ENCODE measurements at regions of chr16 and their contacts with region 1.

Region 1: DNA sequence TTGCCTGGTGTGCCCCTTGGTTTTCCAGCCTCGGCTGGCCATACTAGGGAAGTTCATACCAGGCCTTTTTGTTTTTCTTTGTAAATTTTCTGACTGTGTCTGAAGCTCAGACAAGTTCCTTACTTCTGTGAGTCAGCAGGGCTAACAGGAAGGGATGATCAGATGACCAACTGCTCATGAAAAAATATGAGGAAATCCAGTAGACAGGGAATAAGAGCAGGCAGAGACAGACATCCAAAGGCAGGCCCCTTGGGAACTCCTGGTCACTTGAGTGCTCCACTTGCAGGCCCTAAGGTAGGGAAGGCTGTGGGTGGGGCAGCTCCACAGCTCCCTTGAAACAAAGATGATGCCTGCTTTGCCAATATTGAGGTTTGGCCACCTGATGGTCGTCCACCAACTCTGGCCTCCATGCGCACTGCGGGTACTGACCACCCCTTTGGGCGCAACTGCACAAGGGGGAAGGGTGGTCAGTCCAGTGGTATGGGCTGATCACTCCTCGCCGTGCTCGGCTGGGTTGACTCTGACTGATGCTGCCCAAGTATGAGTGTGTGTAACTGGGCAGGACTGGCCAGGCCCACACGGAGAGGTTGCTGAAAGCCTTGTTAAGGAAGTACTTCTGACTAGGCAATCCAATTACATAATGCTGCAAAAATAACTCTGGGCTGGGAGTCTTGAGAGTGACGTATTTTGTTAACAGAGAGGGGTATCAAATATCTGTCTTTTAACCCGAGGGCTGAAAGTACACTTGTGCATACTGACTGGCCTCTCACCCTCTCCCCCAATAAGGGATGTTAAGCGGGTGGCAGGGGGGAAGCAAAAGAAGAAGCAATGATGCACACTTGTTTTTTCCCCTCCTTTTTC is 20.8 kb upstream of the ZFHX3 start:
- DNase-seq: peak in 2 of 6 donors; percentile 26 to 68
- ATAC-seq: peak in 3 of 4 donors; percentile 26 to 64 (median 41)
- H3K4me3 ChIP-seq: no peak overlapping the region
- H3K27ac ChIP-seq: peak overlapping the region in 3 of 4 donors; percentile 42 to 92 (median 84)
- H3K4me1 ChIP-seq: peaks cover 0 to 47% (median 6%) of the 10 kb centered on the region in 3 donors
- H3K27me3 ChIP-seq: peaks cover 0 to 4% (median 0%) of the 10 kb centered on the region in 4 donors
- CTCF ChIP-seq: no peak

Region 2: GRCh38 chr16:72910875-72911274 is 157.9 kb before region 1 on chr16:
- intact Hi-C with region 1: no loop called
- DNase-seq: no peak
- ATAC-seq: no peak
- H3K4me3 ChIP-seq: no peak overlapping the region
- H3K27ac ChIP-seq: no peak overlapping the region
- H3K4me1 ChIP-seq: peaks cover 6 to 9% (median 9%) of the 10 kb centered on the region in 3 donors
- H3K27me3 ChIP-seq: no peaks in the 10 kb centered on the region
- CTCF ChIP-seq: no peak

Region 3: DNA sequence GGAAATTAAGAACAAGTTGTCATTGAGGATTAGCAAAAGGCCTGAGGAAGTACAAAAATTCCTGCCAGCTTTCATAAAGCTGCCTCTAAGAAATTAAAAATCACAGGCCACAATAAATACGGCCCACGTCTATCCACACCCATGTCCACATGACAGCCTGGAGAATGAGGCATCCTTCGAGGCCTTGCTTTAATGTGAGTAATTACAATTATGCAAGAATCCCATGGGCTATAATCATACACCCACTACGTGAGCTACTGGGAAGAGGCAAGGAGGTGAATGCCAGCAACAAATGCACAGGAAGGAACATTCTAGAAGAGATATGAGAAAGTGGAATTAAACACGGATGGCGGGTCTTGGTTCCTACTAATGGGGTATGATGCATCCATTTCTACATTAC is 44.6 kb after region 1 on chr16:
- intact Hi-C with region 1: no loop called
- DNase-seq: no peak
- ATAC-seq: peak in 1 of 4 donors; percentile 54
- H3K4me3 ChIP-seq: no peak overlapping the region
- H3K27ac ChIP-seq: no peak overlapping the region
- H3K4me1 ChIP-seq: no peaks in the 10 kb centered on the region
- H3K27me3 ChIP-seq: no peaks in the 10 kb centered on the region
- CTCF ChIP-seq: no peak

Region 4: DNA sequence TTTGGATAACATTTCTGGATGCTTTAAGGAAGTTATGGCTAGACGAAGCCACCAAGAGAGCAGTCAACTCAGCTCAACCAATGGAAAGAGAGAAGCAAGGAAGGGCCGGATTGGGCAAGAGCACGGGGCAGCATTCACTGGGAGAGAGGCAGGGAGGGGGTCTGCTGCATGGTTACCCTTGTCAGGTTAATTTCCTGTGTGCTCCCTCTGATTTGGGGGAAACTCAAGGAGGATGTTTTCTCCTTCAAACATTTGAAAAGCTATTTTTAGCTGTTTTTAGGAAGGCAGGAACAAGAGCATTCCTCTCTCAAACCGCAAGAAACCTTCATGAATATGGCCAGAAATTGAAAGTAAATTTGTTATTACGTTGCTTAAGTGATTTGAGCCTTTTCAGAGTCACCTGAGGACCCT is 97.7 kb after region 1 on chr16:
- intact Hi-C with region 1: loop called in 2 of 3 experiments (anchors 10 kb)
- DNase-seq: no peak
- ATAC-seq: peak in 2 of 4 donors; percentile 48 to 60
- H3K4me3 ChIP-seq: no peak overlapping the region
- H3K27ac ChIP-seq: no peak overlapping the region
- H3K4me1 ChIP-seq: peaks cover 0 to 5% (median 0%) of the 10 kb centered on the region in 3 donors
- H3K27me3 ChIP-seq: no peaks in the 10 kb centered on the region
- CTCF ChIP-seq: no peak

Region 5: DNA sequence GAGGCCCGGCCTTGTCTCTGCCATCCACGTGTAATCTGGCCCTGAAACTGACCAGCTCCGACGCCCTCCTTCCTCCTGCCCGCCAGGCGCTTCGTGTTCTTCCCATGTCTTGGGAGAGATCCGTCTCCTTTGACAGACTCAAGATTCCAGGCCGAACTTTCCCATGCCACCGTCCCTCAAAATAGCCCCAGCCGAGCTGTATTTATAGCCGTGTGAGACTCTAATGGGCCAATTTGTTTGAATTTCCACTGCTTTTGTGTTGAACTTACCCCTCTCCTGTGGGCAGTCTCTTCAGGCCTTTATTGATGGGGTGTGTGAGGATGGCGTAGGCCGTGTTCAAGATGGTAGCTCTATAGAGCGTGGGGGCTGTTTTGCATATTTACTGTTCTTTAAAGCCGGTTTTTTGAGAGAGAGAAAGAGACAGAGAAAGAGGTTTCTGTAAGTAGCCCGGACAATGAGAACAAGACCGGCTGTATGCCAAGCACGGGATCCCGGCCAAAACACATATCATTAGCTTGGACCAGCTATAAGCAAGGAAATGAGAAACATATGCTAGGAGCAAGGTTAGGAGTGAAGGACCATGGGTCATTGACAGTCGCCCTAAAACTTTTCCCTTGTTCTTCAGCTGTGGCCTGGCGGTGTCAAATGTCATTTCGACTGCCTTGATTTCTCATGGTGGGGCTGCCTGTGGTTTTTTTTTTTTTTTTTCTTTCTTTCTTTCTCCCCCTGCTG is 103.6 kb after region 1 on chr16:
- intact Hi-C with region 1: loop called in 2 of 3 experiments (anchors 10 kb)
- DNase-seq: peak; percentile 78 to 89 (median 83)
- ATAC-seq: peak; percentile 88 to 94 (median 90)
- H3K4me3 ChIP-seq: peak overlapping the region in 1 of 4 donors; percentile 10
- H3K27ac ChIP-seq: peak overlapping the region in 1 of 4 donors; percentile 44
- H3K4me1 ChIP-seq: peaks cover 0 to 6% (median 4%) of the 10 kb centered on the region in 3 donors
- H3K27me3 ChIP-seq: no peaks in the 10 kb centered on the region
- CTCF ChIP-seq: peak in 2 of 4 donors; percentile 12 to 18

Region 6: DNA sequence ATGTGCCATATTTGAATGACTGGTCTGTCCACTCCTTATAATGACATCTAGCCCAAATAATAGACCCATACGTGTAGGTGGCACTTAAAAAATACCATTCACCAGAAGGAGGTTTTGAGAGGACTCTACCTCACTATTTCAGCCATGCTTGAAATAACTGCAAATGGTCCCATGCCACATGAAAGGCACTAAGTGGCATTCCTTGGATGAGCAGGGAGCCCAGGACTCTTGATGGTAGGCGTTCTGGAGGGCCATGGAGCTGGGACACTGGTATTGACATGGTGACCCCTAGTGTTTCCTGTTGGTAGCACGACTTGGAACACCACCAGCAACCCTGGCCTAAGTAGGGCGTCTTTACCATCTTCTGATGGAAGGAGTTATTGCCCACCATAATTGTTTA is 127.9 kb after region 1 on chr16:
- intact Hi-C with region 1: loop called in 1 of 3 experiments (anchors 10 kb)
- DNase-seq: peak in 4 of 6 donors; percentile 52 to 78 (median 58)
- ATAC-seq: peak; percentile 86 to 100 (median 98)
- H3K4me3 ChIP-seq: no peak overlapping the region
- H3K27ac ChIP-seq: no peak overlapping the region
- H3K4me1 ChIP-seq: no peaks in the 10 kb centered on the region
- H3K27me3 ChIP-seq: no peaks in the 10 kb centered on the region
- CTCF ChIP-seq: peak; percentile 19 to 60 (median 50)

Measured in pancreas (tissue), 10 donors.